ENCODE measurements at regions of chr6 and their contacts with region 1.

Region 1: DNA sequence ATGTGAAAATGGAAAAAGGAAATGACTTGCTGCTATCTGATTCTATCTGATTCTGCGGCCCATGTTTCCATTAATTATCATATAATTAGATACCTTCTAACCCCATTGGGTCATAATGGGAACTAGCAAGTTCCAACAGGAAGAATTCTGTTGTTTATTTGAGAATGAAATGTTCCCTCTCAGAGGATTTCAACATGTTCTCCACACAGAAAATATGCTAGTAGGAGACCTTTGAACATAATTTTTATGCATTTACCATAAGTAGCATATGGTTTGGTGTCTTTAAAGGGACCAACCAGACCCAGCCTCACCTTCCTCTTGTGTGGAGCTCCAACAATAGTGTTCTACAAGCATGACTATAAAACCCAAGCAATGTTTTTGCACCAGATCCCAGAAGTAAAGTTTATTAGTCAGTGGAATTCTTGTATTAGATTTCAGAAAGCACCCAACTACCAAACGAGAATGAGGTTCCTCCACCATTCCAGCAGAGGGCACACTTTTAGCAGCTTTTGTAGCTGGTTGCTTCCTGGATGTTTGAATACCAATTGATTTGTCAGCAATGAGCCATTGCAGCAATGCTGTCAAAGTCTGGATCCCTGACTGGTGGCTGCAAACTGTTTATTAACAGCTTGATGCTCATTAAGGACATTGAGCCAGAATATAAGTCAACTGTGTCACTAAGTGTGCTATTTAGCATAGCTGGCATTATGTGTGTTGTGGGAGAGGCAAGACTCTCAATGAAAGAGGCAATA is 143.6 kb upstream of the GJE1 start:
- H3K4me3 ChIP-seq: no peak overlapping the region
- H3K27ac ChIP-seq: no peak overlapping the region
- H3K4me1 ChIP-seq: no peaks in the 10 kb centered on the region
- CTCF ChIP-seq: no peak

Region 2: DNA sequence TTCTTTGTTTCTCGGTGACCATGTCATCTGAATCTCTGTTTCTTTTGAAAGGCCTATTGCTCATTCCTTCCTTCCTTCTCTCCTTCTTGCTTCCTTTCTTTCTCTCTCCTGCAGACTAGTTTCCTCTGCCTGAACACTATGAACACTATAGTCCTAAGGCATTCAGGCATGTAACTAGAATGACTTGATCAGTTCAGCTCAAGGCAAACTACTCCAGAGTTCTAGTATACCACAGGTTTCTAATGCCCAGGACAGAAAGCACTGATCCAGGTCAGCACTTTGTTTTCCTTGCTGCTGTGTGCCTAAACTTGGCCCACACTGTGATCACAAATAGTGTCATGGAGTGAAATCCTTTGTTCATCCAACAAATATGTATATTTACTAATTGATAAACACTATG is 180.5 kb before region 1 on chr6:
- CTCF ChIA-PET with region 1: no interaction called
- POLR2A ChIA-PET with region 1: no interaction called
- H3K4me3 ChIP-seq: no peak overlapping the region
- H3K27ac ChIP-seq: no peak overlapping the region
- H3K4me1 ChIP-seq: no peaks in the 10 kb centered on the region
- CTCF ChIP-seq: no peak

Region 3: DNA sequence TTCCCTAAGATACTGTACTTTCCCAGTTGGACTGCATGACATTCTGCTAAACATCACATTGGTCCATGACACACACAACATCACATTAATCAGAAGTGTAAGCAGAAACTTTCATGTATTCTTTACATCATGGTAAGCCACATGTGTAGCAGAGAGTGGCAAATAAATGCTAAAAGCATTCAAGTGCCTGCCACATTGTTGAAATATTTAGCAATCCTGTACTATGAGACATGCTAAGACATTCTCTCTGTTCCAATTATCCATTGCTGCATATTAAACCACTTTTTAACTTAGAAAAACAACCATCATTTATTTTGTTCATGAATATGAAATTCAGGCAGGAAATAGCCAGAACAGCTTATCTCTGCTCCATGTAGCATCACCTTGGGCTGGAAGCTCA is 64.1 kb before region 1 on chr6:
- CTCF ChIA-PET with region 1: no interaction called
- POLR2A ChIA-PET with region 1: no interaction called
- H3K4me3 ChIP-seq: no peak overlapping the region
- H3K27ac ChIP-seq: no peak overlapping the region
- H3K4me1 ChIP-seq: no peaks in the 10 kb centered on the region
- CTCF ChIP-seq: no peak

Region 4: DNA sequence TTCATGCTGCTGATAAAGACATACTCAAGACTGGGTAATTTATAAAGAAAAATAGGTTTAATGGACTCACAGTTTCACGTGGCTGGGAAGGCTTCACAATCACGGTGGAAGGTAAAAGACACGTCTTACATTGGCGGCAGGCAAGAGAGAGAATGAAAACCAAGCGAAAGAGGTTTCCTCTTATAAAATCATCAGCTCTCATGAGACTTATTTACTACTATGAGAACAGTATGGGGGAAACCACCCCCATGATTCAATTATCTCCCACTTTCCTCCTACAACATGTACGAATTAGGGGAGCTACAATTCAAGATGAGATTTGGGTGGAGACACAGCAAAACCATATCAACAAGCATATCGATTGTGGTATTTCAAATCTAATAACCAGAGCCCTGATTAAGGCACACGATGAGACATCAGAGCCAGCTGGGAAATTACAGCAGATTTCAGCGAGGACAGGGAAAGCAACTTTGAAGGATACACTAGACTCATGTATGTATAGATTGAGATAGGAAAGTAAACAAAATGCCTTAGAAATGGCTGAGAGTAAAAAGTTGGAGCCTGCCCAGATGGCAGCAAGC is 13.8 kb after region 1 on chr6:
- CTCF ChIA-PET with region 1: interaction called, 13 read pairs
- POLR2A ChIA-PET with region 1: no interaction called
- H3K4me3 ChIP-seq: no peak overlapping the region
- H3K27ac ChIP-seq: no peak overlapping the region
- H3K4me1 ChIP-seq: no peaks in the 10 kb centered on the region
- CTCF ChIP-seq: no peak

Region 5: DNA sequence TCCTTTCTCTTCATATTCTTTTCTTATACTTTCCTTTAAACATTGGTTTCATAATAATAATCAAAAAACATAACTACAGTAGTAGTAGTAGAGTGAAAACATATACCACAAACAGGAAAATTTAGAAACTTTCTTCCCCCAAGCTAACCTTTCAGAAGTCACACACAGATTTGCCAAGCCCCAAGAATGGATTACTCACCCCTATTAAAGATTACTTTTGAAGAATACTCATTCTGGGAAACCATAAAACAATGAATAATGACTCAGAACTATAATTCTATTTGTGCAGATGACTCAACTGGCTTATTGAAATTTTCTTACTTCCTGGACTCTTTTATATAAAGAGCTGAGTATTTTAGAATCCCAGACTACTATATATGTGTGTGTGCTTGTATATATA is 24.2 kb after region 1 on chr6:
- CTCF ChIA-PET with region 1: interaction called, 21 read pairs
- POLR2A ChIA-PET with region 1: no interaction called
- H3K4me3 ChIP-seq: no peak overlapping the region
- H3K27ac ChIP-seq: no peak overlapping the region
- H3K4me1 ChIP-seq: no peaks in the 10 kb centered on the region
- CTCF ChIP-seq: no peak

Region 6: DNA sequence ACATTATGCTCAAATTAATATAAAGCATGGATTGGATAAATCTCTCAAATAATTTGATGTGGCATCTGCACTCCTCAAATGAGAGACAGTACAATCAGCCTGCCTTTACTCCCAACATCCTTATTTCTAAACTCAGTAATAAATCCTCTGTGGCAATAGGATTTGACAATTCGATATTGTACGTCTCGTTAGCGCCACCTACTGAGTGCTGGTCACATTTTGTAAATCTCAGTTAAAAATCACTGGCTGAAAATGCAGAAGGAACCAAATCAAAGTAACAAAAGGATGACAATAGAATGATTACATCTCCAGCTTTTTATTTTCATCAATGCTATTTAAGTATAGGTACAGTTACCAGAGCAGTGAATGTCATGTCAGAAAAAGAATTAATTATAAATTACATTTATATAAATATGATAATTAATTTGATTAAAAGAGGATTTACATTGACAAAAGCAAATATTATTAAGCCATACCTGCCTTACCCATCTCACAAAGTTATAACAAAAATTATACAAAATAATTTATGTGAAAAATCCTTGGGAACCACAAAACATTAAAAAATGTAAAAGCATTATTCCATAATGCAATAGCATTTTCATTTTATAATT is 123.4 kb after region 1 on chr6:
- CTCF ChIA-PET with region 1: interaction called, 62 read pairs
- POLR2A ChIA-PET with region 1: no interaction called
- H3K4me3 ChIP-seq: no peak overlapping the region
- H3K27ac ChIP-seq: no peak overlapping the region
- H3K4me1 ChIP-seq: no peaks in the 10 kb centered on the region
- CTCF ChIP-seq: no peak

Region 7: DNA sequence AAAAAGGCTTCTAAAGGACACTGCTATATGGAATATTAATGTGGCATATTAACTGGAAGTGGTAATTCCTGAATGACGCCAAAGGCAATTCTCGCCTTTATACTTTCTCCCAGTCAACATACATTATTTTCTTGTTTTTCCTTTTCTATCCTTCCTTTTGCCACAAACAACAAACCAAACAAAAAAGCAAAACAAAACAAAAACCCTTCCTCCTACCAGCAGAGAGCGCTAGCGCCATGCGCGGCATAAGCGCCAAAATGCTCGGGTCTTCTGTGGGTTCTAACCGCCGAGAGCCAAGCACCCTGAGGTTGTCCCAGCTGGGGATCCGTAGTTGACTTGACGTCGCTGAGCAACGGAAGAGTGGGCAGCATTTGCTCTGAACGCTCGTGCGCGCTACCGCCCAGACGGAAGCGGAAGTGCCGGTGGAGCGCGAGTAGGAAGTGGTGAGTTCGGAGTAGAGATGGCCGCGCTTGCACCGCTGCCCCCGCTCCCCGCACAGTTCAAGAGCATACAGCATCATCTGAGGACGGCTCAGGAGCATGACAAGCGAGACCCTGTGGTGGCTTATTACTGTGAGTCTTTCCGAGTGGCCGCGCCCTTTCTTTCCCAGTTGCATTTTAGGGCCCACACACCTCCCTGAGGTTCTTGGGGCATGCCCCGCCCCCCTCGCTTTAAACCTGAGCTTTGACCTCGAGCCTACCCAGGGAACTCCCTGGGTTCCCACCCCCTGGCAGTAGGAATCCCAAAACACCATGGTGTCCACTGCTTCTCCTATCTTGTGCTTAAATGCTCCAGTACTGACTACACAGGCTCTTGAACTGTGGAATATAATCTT is 157.9 kb after region 1 on chr6 and contains the starts of genes NMBR and VTA1:
- CTCF ChIA-PET with region 1: no interaction called
- POLR2A ChIA-PET with region 1: no interaction called
- H3K4me3 ChIP-seq: peak within 1 kb of the TSS; percentile 82
- H3K27ac ChIP-seq: no peak within 1 kb of the TSS; the same call in 1 of the 2 replicates
- H3K4me1 ChIP-seq: 0 out of 2 replicates have a peak, but pooled peaks cover 3% of the 10 kb centered on the region
- CTCF ChIP-seq: peak; percentile 97

Region 8: GRCh38 chr6:142378138-142378875 is 389.2 kb after region 1 on chr6:
- CTCF ChIA-PET with region 1: no interaction called
- POLR2A ChIA-PET with region 1: no interaction called
- H3K4me3 ChIP-seq: no peak overlapping the region; the same call in 1 of the 2 replicates
- H3K27ac ChIP-seq: peak overlapping the region; percentile 18; the same call in 1 of the 2 replicates
- H3K4me1 ChIP-seq: peaks cover 38% of the 10 kb centered on the region
- CTCF ChIP-seq: no peak